Breast epithelium (tissue), 4 donors: ENCODE measurements at regions of chr2 and their contacts with region 1.

Region 1: DNA sequence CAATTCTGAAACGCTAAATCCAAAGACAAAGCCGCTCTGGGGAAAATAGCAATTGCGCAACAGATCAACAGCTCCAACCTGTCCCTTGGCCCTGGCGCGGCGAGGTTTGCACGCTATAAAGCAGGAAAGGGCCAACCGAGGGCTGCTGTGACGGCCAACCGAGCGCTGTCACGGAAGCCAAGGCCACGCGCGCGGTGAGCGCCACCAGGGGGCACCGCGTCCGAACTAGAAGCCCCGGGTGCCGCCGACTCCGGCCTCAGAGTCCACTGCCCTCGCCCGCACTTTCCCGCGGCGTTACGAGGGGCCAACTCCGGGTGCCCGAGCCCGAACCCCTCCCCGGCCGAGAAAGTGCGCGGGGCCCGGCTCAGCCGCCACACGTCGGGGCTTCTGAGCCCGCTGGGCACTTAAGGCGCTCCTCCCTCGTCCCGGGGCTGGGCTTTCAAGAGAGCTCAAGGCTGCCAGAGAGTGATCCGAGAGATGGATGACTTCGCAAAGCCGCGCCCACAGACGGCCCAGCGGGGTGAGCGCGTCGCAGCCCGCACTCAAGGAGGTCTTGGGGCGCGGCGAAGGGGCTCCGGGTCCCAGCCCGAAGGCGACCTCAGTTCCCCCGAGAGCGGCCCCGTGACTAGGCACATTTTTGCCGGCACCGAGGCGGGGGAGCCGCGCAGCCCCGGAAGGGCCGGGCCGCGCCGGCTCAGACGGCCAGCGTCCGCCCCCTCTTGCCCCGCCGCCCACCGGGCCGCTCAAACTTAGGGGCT is 897 bp downstream of the NFE2L2 start:
- DNase-seq: peak; percentile 98
- H3K4me3 ChIP-seq: peak overlapping the region; percentile 75 to 99 (median 98)
- H3K27ac ChIP-seq: peak overlapping the region; percentile 100
- H3K4me1 ChIP-seq: peaks cover 0 to 13% of the 10 kb centered on the region in 2 donors
- H3K27me3 ChIP-seq: no peaks in the 10 kb centered on the region
- CTCF ChIP-seq: peak; percentile 82 to 97 (median 96)
- POLR2A ChIP-seq: no peak

Region 2: GRCh38 chr2:177212106-177212890 is 51.3 kb before region 1 on chr2 and contains the start of gene HNRNPA3:
- intact Hi-C with region 1: loop called (anchors 2 kb)
- DNase-seq: peak; percentile 98 to 99
- H3K4me3 ChIP-seq: peak within 1 kb of the TSS; percentile 86 to 93 (median 92)
- H3K27ac ChIP-seq: peak within 1 kb of the TSS; percentile 100
- H3K4me1 ChIP-seq: peaks cover 0 to 6% of the 10 kb centered on the region in 2 donors
- H3K27me3 ChIP-seq: no peaks in the 10 kb centered on the region
- CTCF ChIP-seq: peak in 1 of 3 donors; percentile 32
- POLR2A ChIP-seq: peak; percentile 92
- total RNA-seq, gene HNRNPA3: 60.6 to 100.0 (median 95.9) TPM

Region 3: DNA sequence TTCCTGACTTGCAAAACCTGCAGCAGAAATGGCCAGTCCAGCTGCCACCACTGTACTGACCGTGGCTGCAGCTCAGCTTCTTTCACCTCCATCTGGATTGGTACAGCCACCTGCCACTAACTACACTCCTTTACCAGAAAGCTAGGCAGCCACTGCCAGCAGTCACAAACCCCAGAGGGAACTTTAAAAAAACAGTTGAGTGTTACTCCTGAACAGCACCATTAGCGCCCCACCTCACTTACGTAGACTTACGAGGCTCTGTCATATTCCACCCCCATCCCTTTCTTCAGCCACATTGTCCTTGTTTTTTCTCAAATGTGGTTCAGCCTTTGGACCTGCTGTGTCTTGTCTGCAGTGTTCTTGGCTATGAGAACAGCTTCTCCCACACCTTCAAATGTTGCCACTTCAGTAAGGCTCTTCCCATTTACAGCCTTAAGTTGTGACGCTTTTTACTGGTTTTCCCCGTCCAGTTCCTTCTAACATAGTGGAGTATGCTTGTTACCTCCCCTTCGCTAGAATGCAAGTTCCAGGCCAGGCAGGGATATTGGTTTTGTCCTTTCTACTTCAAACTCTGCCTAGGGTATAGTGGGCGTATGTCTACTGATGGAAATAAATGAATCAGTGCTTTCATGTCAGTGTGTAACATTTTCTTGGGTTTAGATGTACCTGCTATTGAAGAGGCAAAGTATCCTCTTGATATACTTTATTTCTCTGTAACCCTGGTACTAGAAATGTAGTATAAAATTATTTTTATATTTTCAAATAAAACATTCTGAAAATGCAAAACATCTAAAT is 34.0 kb before region 1 on chr2:
- intact Hi-C with region 1: no loop called
- DNase-seq: no peak
- H3K4me3 ChIP-seq: no peak overlapping the region
- H3K27ac ChIP-seq: peak overlapping the region; percentile 21 to 52
- H3K4me1 ChIP-seq: no peaks in the 10 kb centered on the region
- H3K27me3 ChIP-seq: no peaks in the 10 kb centered on the region
- CTCF ChIP-seq: no peak
- POLR2A ChIP-seq: no peak

Region 4: GRCh38 chr2:177247693-177248262 is 15.9 kb before region 1 on chr2:
- intact Hi-C with region 1: loop called (anchors 1 kb)
- DNase-seq: no peak
- H3K4me3 ChIP-seq: no peak overlapping the region
- H3K27ac ChIP-seq: peak overlapping the region; percentile 49 to 51
- H3K4me1 ChIP-seq: peaks cover 12 to 31% of the 10 kb centered on the region in 2 donors
- H3K27me3 ChIP-seq: no peaks in the 10 kb centered on the region
- CTCF ChIP-seq: no peak
- POLR2A ChIP-seq: no peak

Region 5: GRCh38 chr2:177467646-177468045 is 204.0 kb after region 1 on chr2:
- intact Hi-C with region 1: no loop called
- DNase-seq: no peak
- H3K4me3 ChIP-seq: no peak overlapping the region
- H3K27ac ChIP-seq: no peak overlapping the region
- H3K4me1 ChIP-seq: no peaks in the 10 kb centered on the region
- H3K27me3 ChIP-seq: no peaks in the 10 kb centered on the region
- CTCF ChIP-seq: no peak
- POLR2A ChIP-seq: no peak